Cardiac septum (tissue), 1 donor: ENCODE measurements at regions of chr1 and their contacts with region 1.

Region 1: DNA sequence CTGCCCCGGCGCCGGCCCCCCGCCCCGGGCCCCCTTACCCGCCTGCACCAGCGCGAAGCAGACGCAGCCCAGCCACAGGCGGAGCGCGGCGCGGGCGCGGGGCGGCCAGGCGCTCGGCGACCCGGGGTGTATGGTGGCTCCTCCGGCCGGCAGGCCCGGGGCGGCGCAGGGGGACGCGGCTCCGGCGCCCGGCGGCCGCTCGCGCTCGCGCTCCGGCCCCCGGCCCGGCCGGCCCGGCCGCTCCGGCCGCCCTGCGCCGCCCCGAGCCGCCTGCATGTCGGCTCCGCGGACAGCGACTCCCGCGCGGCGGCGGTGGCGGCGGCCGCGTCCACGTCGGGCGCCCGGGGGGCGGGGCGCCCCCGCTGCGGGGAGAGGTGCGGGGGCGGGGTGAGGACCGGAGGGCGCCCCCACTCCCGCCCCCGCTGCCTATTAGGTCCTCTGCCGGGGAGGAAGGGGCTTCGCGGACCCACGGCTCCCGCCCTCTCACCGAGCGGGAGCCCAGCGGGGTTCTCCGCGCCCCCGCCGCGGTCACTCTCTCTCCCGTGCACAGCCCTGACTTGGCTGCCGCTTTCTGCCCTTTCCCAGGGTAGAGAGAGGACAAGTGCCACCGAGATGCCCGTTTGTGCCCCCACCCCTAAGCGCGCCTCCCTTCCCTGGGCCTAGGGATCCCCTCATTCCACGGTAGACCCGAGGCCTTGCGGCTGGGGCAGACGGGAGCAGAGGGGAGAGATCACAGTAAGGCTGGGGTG is at the start of gene FNDC5:
- DNase-seq: no peak
- total RNA-seq, gene FNDC5: 18.7 TPM

Region 2: GRCh38 chr1:32627596-32628162 is 243.1 kb before region 1 on chr1:
- intact Hi-C with region 1: no loop called
- DNase-seq: no peak

Region 3: DNA sequence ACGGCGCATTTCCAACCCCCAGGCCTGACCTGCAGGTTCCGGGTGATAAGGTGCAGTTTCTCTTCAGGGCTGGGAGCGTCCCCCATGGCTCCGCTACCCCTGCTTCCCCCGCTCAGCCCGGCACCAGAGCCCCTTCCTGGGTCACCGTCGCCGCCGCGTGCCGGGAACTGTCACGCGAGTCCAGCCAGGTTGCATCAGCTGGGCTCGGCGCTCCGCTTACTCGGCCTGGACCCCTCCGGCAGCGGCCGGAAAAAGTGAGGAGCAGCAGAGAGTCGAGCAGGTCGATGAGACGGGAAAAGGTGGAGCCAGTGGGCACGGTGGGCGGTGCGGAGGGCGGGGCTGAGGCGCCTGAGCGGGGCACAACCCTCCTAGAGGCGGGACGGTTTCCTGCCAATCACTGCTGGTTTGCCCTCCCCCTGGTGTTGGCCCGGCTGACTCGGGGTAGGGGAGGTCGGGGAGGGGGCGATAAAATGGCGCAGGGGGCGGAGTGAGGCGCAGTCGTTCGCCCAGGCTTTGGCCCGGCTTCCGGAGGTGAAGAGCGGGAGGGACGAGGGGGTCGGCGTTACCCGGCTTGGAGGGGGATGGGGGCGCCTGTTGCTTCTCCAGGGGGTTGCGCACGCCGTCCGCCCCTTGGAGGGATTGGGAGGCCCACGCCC is 53.5 kb before region 1 on chr1 and contains the starts of genes S100PBP and YARS1:
- intact Hi-C with region 1: loop called (anchors 5 kb)
- DNase-seq: peak; percentile 100
- total RNA-seq, gene S100PBP: 12.5 TPM
- total RNA-seq, gene YARS1: 27.8 TPM